IMR-90 (cell line): ENCODE measurements at regions of chr12 and their contacts with region 1.

Region 1: DNA sequence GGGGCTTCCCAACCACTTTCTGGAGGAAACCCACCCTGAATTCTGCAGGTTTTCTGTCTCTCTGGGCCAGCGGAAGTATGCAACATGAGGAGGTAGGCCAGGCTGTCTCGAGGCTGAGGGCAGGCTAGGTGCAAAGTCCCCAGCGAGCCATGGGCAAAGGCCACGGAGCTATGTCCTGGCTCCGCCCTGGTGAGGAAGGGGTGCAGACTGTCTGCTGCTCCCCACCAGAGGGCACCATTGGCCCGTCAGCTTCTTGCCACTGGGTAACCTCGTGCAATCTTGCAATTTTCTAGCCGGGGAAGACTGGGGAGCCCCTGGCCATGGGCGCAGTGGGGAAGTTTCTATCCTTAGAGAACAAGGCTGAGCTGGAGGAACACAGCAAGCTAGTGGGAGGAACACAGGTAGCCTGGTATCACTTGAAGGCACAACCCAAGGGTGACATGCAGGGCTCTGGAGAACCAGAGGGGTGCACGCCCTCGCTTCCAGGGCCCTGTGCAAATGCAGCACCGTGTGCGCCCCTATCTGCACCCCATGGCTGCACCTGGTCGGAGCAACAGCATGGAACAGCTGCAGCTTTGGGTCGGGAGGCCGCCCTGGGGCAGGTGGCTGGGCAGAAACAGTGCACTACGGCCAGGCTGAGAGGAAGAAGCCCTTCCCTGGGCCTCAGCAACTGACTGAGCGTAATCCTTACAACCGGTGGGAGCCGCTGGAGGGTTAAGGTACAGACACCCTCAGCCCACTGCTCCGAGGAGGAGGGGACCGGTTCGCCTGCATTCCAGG is 27.6 kb upstream of the RPLP0 start:
- DNase-seq: peak; percentile 79
- ATAC-seq: peak; percentile 45
- H3K4me3 ChIP-seq: no peak overlapping the region
- H3K27ac ChIP-seq: peak overlapping the region; percentile 93
- H3K4me1 ChIP-seq: peaks cover 53% of the 10 kb centered on the region
- H3K27me3 ChIP-seq: no peaks in the 10 kb centered on the region
- CTCF ChIP-seq: peak; percentile 96
- POLR2A ChIP-seq: peak; percentile 46; the same call in 1 of the 2 replicates
- RAD21 ChIP-seq: peak; percentile 98

Region 2: DNA sequence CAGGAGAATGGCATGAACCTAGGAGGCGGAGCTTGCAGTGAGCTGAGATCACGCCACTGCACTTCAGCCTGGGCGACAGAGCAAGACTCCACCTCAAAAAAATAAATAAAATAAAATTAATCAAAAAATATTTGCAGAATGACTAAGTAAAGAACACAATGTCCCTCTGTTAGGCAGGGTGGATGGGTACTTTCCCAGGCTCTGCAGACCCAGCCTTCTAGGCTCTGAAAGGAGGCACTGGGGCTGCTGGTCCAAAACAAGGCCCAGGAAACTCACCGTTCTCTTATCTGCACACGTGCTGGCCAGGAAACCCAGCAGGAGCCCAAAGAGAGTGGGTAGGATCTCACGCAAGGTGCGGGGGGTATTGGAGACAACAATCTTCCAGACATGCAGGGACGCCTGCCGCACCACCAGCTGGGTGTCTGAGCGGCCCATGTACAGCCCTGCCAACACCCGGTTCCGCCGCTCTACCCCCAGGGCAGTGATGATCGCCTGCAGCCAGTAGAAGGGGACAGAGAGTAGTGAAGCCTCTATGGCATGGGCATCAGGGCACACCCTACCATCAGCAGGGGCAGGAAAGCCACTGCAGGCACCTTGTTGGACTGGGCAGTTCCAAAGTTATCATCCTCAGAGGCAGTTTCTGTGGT is 86.1 kb before region 1 on chr12:
- CTCF ChIA-PET with region 1: no interaction called
- POLR2A ChIA-PET with region 1: no interaction called
- dilution Hi-C with region 1: no loop called
- in situ Hi-C with region 1: no loop called
- intact Hi-C with region 1: no loop called
- DNase-seq: peak; percentile 46
- ATAC-seq: 0 out of 2 replicates have a peak, but pooled peaks have one; percentile 9
- H3K4me3 ChIP-seq: no peak overlapping the region
- H3K27ac ChIP-seq: no peak overlapping the region
- H3K4me1 ChIP-seq: peaks cover 11% of the 10 kb centered on the region
- H3K27me3 ChIP-seq: no peaks in the 10 kb centered on the region
- CTCF ChIP-seq: no peak
- POLR2A ChIP-seq: no peak
- RAD21 ChIP-seq: no peak

Region 3: GRCh38 chr12:120199595-120200306 is 28.7 kb before region 1 on chr12:
- CTCF ChIA-PET with region 1: interaction called, 7 read pairs
- POLR2A ChIA-PET with region 1: interaction called, 19 read pairs
- dilution Hi-C with region 1: no loop called
- in situ Hi-C with region 1: no loop called
- intact Hi-C with region 1: no loop called
- DNase-seq: peak; percentile 77
- ATAC-seq: no peak
- H3K4me3 ChIP-seq: peak overlapping the region; percentile 57
- H3K27ac ChIP-seq: peak overlapping the region; percentile 57
- H3K4me1 ChIP-seq: peaks cover 8% of the 10 kb centered on the region
- H3K27me3 ChIP-seq: no peaks in the 10 kb centered on the region
- CTCF ChIP-seq: no peak
- POLR2A ChIP-seq: peak; percentile 52; the same call in 1 of the 2 replicates
- RAD21 ChIP-seq: no peak

Region 4: DNA sequence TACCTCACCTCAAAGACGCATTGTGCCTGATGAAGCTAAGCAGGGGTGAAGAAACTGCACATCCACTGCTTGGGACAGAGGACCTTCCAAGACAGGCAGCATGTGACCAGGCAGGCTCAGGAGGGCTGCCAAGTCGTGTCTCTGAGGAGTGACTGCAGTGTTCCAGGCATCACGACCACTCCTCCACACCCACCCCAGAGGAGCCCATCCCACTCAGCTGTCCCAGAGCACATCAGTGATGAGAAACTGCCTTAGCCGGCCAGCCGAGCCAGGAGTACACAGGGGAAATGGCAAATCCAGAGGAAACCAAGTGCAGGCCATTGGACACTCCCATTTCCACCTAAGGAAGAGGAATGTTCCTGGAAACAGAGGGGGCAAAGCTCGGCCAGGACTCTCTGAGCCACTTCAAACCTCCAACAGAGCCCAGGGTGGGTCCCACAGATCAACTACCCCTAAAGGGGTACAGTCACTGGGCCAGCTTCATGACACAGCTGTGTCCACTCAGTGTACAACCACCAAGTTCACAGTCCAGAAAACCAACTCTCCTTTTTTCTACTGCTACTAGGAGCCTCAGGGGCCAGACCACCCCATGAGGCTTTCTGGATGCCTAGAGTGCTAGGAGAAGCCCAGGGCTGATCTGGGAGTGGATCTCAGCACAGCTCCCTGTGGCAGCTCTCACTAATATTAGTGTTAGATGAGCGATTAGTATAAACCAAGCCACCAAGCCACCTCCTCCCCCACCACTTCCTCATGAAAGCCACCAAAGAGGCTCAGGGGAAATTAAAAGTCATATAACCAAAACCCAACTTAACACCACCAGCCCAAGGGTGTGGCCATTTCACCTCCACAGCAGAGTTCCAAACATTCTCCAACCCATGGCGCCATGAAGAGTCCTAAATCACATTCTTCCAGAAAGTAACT is 21.7 kb after region 1 on chr12:
- CTCF ChIA-PET with region 1: interaction called, 13 read pairs
- POLR2A ChIA-PET with region 1: interaction called, 5 read pairs
- dilution Hi-C with region 1: no loop called
- in situ Hi-C with region 1: no loop called
- intact Hi-C with region 1: no loop called
- DNase-seq: no peak
- ATAC-seq: peak; percentile 31
- H3K4me3 ChIP-seq: no peak overlapping the region
- H3K27ac ChIP-seq: peak overlapping the region; percentile 45
- H3K4me1 ChIP-seq: peaks cover 34% of the 10 kb centered on the region
- H3K27me3 ChIP-seq: no peaks in the 10 kb centered on the region
- CTCF ChIP-seq: no peak
- POLR2A ChIP-seq: no peak
- RAD21 ChIP-seq: no peak

Region 5: DNA sequence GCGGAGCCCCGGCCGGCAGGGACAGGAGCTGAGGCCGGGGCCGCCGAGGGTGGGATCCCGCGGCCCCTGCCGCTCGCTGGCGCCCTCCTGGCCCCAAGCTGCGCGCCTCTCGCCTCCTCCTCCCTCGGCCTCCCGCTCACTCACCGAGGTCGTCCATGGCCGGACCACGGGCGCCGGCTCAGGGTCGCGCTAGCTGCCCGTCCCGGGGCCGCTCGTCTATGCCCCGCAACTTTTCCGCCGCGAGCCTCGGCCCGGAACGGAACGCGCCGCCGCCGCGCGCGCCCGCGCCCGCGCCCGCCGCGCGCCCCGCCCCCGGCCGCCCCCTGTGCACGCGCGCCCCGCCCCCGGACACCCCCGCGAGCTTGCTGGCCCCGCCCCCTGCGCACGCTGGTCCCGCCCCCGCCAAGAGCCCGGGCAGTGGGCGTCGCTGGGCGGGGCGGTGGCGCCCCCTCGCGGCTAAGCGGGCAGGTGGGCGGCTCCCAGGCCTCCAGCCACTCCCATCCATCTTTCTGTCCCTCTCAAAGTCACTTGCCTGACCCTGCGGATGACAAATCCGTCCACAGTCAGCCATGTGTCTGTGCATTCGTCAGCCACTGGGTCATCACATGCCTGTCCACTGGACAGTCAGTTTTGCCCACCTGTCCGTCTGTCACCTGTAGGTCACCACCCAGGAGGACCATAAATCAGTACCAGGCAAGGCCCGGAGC is 37.1 kb after region 1 on chr12 and contains the start of gene PXN:
- CTCF ChIA-PET with region 1: interaction called, 116 read pairs
- POLR2A ChIA-PET with region 1: interaction called, 39 read pairs
- dilution Hi-C with region 1: no loop called
- in situ Hi-C with region 1: loop called (anchors 5 kb)
- intact Hi-C with region 1: loop called (anchors 1 kb)
- DNase-seq: peak; percentile 72
- ATAC-seq: peak; percentile 87
- H3K4me3 ChIP-seq: peak within 1 kb of the TSS; percentile 98
- H3K27ac ChIP-seq: peak within 1 kb of the TSS; percentile 97
- H3K4me1 ChIP-seq: peaks cover 19% of the 10 kb centered on the region
- H3K27me3 ChIP-seq: no peaks in the 10 kb centered on the region
- CTCF ChIP-seq: peak; percentile 91
- POLR2A ChIP-seq: 0 out of 2 replicates have a peak, but pooled peaks have one; percentile 28
- RAD21 ChIP-seq: peak; percentile 91
- total RNA-seq, gene PXN: 33.9 and 46.6 TPM in 2 replicates